Naive thymus-derived CD4-positive, alpha-beta T cell (primary cell): ENCODE measurements at regions of chr16 and their contacts with region 1.

Region 1: GRCh38 chr16:67183627-67184328 is at the start of gene MATCAP1:
- DNase-seq: peak; percentile 90 to 98 (median 96)
- ATAC-seq: peak; percentile 97
- H3K4me3 ChIP-seq: peak within 1 kb of the TSS; percentile 79
- H3K4me3 Mint-ChIP-seq: peak within 1 kb of the TSS in 5 of 10 donors; percentile 48 to 91 (median 86)
- H3K27ac ChIP-seq: peak within 1 kb of the TSS; percentile 97
- H3K27ac Mint-ChIP-seq: peak within 1 kb of the TSS in 2 of 9 donors; percentile 58 to 67
- H3K4me1 ChIP-seq: peaks cover 12 to 15% of the 10 kb centered on the region in 2 donors
- H3K4me1 Mint-ChIP-seq: peaks cover 8 to 24% (median 13%) of the 10 kb centered on the region in 7 donors
- H3K27me3 ChIP-seq: no peaks in the 10 kb centered on the region
- H3K27me3 Mint-ChIP-seq: peaks cover 4 to 15% (median 4%) of the 10 kb centered on the region in 5 donors
- total RNA-seq, gene MATCAP1: 4.3 to 88.1 (median 11.0) TPM

Region 2: DNA sequence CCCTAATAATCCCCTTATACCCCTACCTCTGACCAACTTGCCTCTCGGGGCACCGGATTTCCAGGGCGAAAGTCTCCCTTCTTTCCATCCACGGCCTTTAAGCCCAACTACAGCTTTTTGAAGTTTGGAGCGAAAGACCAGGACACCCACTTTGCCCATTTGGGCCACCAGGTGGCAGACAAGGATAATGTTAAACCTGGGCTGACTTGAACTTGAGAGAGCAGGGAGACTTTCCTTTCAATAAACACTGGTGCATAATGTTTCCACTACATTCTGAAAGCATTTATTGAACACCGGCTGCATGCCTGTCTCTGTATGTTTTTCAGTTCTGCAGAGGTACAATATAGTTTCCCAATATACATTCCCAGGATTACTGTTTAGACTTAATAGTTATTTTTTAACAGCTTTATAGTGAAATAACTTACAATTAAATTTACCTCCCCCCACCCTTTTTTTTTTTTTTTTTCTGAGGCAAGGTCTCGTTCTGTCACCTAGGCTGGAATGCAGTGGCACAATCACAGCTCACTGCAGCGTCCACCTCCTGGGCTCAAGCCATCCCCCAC is 229.6 kb before region 1 on chr16:
- CTCF ChIA-PET with region 1: no interaction called
- POLR2A ChIA-PET with region 1: no interaction called
- intact Hi-C with region 1: loop called (anchors 1 kb)
- DNase-seq: peak; percentile 46 to 78 (median 67)
- ATAC-seq: peak; percentile 86
- H3K4me3 ChIP-seq: no peak overlapping the region
- H3K4me3 Mint-ChIP-seq: peak overlapping the region in 1 of 10 donors; percentile 5
- H3K27ac ChIP-seq: no peak overlapping the region
- H3K27ac Mint-ChIP-seq: peak overlapping the region in 1 of 9 donors; percentile 4
- H3K4me1 ChIP-seq: no peaks in the 10 kb centered on the region
- H3K4me1 Mint-ChIP-seq: peaks cover 11 to 27% (median 15%) of the 10 kb centered on the region in 7 donors
- H3K27me3 ChIP-seq: no peaks in the 10 kb centered on the region
- H3K27me3 Mint-ChIP-seq: peaks cover 31 to 40% (median 35%) of the 10 kb centered on the region in 5 donors

Region 3: DNA sequence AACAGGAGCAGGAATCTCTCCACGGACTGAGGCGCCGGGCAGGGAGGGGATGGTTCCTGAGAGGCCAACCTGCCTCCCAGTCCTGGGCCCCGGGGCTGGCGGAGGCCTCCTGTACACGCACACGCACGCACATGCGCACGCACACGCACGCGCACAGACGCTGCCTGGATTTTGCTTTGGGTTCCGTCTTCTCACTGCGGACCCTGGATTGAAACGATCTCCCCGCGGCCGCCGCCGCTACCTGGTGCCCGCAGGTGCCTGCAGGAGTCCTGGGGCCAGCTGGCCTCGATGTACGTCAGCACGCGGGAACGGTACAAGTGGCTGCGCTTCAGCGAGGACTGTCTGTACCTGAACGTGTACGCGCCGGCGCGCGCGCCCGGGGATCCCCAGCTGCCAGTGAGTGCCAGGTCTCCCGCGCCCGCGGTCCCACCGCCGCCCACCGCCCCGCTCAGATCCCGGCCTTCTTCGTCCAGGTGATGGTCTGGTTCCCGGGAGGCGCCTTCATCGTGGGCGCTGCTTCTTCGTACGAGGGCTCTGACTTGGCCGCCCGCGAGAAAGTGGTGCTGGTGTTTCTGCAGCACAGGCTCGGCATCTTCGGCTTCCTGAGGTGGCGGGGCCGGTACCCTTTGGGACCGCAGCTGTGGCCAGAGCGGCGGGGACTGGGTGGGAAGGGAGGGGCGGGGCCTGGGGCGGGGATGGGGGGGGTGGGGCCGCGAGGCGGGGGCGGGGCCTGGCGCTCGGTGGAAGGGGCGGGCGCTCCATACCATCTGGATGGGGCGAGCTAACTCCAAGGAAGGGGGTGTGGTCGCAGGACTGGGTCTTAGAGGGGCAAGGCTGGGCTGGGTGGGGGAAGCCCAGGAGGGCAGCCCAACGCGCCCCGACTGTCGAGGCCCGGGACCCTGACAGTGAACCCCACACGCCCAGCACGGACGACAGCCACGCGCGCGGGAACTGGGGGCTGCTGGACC is 183.1 kb before region 1 on chr16:
- CTCF ChIA-PET with region 1: no interaction called
- POLR2A ChIA-PET with region 1: no interaction called
- intact Hi-C with region 1: loop called in 1 of 2 experiments (anchors 1 kb)
- DNase-seq: peak; percentile 39 to 73 (median 61)
- ATAC-seq: peak; percentile 81
- H3K4me3 ChIP-seq: peak overlapping the region; percentile 75
- H3K4me3 Mint-ChIP-seq: peak overlapping the region; percentile 65 to 88 (median 84)
- H3K27ac ChIP-seq: peak overlapping the region; percentile 72
- H3K27ac Mint-ChIP-seq: peak overlapping the region; percentile 68 to 89 (median 80)
- H3K4me1 ChIP-seq: peaks cover 4 to 9% of the 10 kb centered on the region in 2 donors
- H3K4me1 Mint-ChIP-seq: peaks cover 6 to 42% (median 14%) of the 10 kb centered on the region in 7 donors
- H3K27me3 ChIP-seq: no peaks in the 10 kb centered on the region
- H3K27me3 Mint-ChIP-seq: no peaks in the 10 kb centered on the region